Caco-2 (cell line): ENCODE measurements at regions of chr5 and their contacts with region 1.

Region 1: GRCh38 chr5:163033646-163034045 is 403.7 kb upstream of the CCNG1 start:
- DNase-seq: no peak
- H3K4me3 ChIP-seq: no peak overlapping the region
- H3K4me3 Mint-ChIP-seq: no peak overlapping the region
- H3K27ac Mint-ChIP-seq: no peak overlapping the region
- H3K4me1 ChIP-seq: no peaks in the 10 kb centered on the region
- H3K4me1 Mint-ChIP-seq: no peaks in the 10 kb centered on the region
- H3K27me3 ChIP-seq: no peaks in the 10 kb centered on the region
- H3K27me3 Mint-ChIP-seq: no peaks in the 10 kb centered on the region
- CTCF ChIP-seq: no peak

Region 2: GRCh38 chr5:162990856-162991497 is 42.7 kb before region 1 on chr5:
- CTCF ChIA-PET with region 1: no interaction called
- POLR2A ChIA-PET with region 1: no interaction called
- intact Hi-C with region 1: loop called (anchors 2 kb)
- DNase-seq: no peak
- H3K4me3 ChIP-seq: no peak overlapping the region
- H3K4me3 Mint-ChIP-seq: no peak overlapping the region
- H3K27ac Mint-ChIP-seq: no peak overlapping the region
- H3K4me1 ChIP-seq: peaks cover 12% of the 10 kb centered on the region
- H3K4me1 Mint-ChIP-seq: no peaks in the 10 kb centered on the region
- H3K27me3 ChIP-seq: no peaks in the 10 kb centered on the region
- H3K27me3 Mint-ChIP-seq: no peaks in the 10 kb centered on the region
- CTCF ChIP-seq: no peak